ENCODE measurements at regions of chr1 and their contacts with region 1.

Region 1: GRCh38 chr1:201703621-201704439 is 125.1 kb upstream of the IPO9 start:
- DNase-seq: peak; percentile 93
- H3K4me3 ChIP-seq: no peak overlapping the region
- H3K27ac ChIP-seq: peak overlapping the region in 2 of 8 donors; percentile 22 to 48
- H3K4me1 ChIP-seq: peaks cover 0 to 13% (median 6%) of the 10 kb centered on the region in 6 donors
- H3K27me3 ChIP-seq: peaks cover 0 to 21% (median 0%) of the 10 kb centered on the region in 7 donors
- CTCF ChIP-seq: peak; percentile 73 to 98 (median 90)
- POLR2A ChIP-seq: no peak

Region 2: DNA sequence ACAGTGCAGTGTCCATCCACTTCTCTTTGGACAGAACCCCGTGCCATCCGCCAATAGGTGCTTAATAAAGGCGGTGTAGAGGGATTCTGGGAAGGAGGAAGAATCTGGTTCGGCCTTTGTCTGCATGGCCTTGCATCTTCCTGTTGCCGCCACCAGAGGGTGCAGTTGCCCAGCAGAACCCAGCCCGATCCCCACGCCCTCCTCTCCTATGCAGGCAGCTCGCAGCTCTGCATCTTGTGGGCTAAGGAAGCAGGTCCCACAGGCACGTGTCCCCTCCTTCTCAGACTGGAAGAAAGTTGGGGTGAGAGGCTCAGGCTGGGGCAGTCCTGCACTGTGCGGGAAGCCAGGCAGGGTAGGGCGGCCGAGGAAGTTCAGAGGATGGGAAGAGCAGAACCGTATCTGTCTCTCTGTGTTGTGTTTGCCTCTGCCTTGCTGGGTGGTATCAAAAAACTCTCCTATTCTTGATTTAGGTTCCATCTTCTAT is 144.1 kb before region 1 on chr1:
- intact Hi-C with region 1: loop called (anchors 5 kb)
- DNase-seq: peak; percentile 93
- H3K4me3 ChIP-seq: no peak overlapping the region
- H3K27ac ChIP-seq: no peak overlapping the region
- H3K4me1 ChIP-seq: peaks cover 0 to 55% (median 18%) of the 10 kb centered on the region in 6 donors
- H3K27me3 ChIP-seq: peaks cover 0 to 8% (median 0%) of the 10 kb centered on the region in 7 donors
- CTCF ChIP-seq: peak; percentile 82 to 97 (median 93)
- POLR2A ChIP-seq: no peak

Region 3: DNA sequence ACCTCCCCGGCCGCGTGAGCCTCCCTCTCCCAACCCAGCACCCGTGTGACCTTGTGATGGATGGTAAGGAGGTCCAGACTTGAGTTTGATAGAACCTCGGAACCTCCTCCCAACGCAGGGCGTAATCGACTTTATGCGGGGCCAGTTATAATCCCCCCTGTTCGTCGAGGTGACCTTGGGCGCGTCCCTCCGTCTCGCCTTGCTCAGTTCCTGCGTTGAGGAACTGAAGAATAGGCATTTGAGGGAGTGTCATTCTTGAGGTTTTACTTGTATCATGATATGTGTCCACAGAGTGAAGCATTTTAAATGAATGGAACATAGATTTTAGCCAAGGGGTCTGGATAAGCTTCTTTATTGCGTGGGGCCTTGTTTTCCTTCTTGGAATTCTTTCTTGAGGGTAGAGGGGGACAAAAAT is 251.9 kb after region 1 on chr1:
- intact Hi-C with region 1: no loop called
- DNase-seq: no peak
- H3K4me3 ChIP-seq: peak overlapping the region; percentile 69 to 97 (median 88)
- H3K27ac ChIP-seq: peak overlapping the region; percentile 83 to 90 (median 87)
- H3K4me1 ChIP-seq: peaks cover 12 to 27% (median 20%) of the 10 kb centered on the region in 6 donors
- H3K27me3 ChIP-seq: no peaks in the 10 kb centered on the region
- CTCF ChIP-seq: no peak
- POLR2A ChIP-seq: no peak